ENCODE measurements at regions of chr2 and their contacts with region 1.

Region 1: DNA sequence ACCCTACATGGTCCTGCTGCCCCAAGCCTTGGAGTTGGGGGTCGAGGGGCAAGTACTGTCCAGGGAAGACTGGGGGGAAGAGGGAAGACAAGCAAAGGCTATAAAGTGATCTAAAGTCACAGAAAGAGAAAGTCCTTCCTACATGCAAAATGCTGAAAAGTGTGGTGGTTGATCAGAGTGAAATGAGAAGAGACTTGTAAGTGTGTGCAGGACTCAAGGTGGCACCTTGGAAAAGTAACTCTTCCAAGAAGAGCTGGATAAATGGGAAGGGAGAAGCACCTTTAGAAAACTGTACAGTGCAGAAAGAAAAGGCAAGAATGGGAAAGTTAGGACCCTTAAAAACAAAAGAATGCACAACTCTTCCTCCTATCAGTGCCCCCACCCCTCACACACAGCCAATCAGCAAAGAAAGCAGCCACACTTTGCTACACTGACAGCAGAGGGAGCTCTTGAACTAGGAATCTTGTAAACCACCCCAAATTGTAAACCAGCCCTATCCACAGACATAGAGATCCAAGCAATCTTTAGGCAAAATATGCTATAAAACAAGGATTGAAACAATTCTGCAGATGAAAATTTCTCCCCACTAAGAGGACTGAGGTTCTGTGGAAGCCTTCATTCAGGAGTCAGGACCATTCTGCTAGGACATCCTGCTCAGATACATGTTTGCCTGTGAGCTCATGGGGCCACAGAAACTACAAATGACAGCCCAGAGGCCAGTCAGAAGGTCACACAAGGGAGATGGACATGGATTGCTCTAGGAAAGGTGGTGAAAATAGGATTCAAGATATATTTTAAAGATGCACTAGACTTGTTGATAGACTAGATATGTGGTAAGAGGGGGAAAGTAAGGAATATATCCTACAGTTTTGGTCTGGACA is 146.4 kb downstream of the FTCDNL1 start:
- DNase-seq: peak; percentile 39
- ATAC-seq: peak; percentile 61
- H3K4me3 Mint-ChIP-seq: no peak overlapping the region
- H3K27ac Mint-ChIP-seq: no peak overlapping the region
- H3K4me1 Mint-ChIP-seq: no peaks in the 10 kb centered on the region
- H3K27me3 Mint-ChIP-seq: peaks cover 3% of the 10 kb centered on the region

Region 2: GRCh38 chr2:199424160-199424559 is 280.4 kb before region 1 on chr2:
- CTCF ChIA-PET with region 1: no interaction called
- POLR2A ChIA-PET with region 1: no interaction called
- intact Hi-C with region 1: no loop called
- DNase-seq: no peak
- ATAC-seq: no peak
- H3K4me3 Mint-ChIP-seq: no peak overlapping the region
- H3K27ac Mint-ChIP-seq: no peak overlapping the region
- H3K4me1 Mint-ChIP-seq: no peaks in the 10 kb centered on the region
- H3K27me3 Mint-ChIP-seq: peaks cover 7% of the 10 kb centered on the region

Region 3: GRCh38 chr2:199692489-199692888 is 12.1 kb before region 1 on chr2:
- CTCF ChIA-PET with region 1: no interaction called
- POLR2A ChIA-PET with region 1: no interaction called
- intact Hi-C with region 1: no loop called
- DNase-seq: no peak
- ATAC-seq: no peak
- H3K4me3 Mint-ChIP-seq: no peak overlapping the region
- H3K27ac Mint-ChIP-seq: no peak overlapping the region
- H3K4me1 Mint-ChIP-seq: no peaks in the 10 kb centered on the region
- H3K27me3 Mint-ChIP-seq: peaks cover 6% of the 10 kb centered on the region

Region 4: DNA sequence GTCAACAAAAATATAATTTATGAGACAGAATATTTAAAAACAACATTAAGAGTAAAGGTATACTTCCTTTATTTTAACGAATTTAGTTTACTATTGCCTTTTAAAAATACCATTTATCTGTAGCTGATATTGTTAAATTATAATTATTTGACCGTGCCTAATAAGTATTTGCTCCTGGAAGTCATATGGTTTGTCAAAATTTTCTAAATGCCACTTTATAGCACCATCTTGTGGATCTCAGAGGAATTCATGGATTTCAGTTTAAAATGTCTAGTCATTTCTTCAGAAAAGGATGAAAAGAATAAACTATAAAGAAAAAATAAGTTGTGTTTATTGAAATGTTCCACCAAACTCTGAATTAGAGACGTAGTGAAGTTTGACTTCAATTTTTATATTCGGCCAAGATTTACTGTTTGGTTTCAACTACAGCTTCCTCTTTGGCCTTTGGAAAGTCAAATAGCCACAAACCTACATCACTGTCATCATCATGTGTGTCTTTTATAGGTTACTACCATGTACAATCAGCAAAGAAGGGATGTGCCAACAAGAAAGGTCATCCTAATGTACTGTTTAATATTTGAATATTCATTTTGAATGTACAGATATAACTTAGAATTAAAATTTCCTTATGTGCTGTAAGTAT is 156.7 kb after region 1 on chr2:
- CTCF ChIA-PET with region 1: interaction called, 3 read pairs
- POLR2A ChIA-PET with region 1: no interaction called
- intact Hi-C with region 1: loop called (anchors 1 kb)
- DNase-seq: no peak
- ATAC-seq: no peak
- H3K4me3 Mint-ChIP-seq: no peak overlapping the region
- H3K27ac Mint-ChIP-seq: no peak overlapping the region
- H3K4me1 Mint-ChIP-seq: no peaks in the 10 kb centered on the region
- H3K27me3 Mint-ChIP-seq: peaks cover 21% of the 10 kb centered on the region

Region 5: DNA sequence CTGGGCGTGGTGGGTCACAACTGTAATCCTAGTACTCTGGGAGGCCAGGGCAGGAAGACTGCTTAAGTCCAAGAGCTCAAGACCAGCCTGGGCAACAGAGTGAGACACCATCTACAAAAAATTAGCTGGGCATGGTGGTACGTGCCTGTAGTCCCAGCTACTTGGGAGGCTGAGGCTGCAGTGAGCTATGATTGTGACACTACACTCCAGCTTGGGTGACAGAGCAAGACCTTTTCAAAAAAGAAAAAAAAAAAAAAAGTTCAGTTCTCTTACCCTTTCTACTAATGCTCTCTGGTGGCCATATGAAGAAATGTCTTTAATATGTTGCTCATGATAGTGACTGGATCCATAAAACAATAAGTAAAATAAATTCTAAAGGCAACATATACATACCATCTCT is 235.8 kb after region 1 on chr2:
- CTCF ChIA-PET with region 1: no interaction called
- POLR2A ChIA-PET with region 1: no interaction called
- intact Hi-C with region 1: loop called (anchors 2 kb)
- DNase-seq: no peak
- ATAC-seq: peak; percentile 87
- H3K4me3 Mint-ChIP-seq: no peak overlapping the region
- H3K27ac Mint-ChIP-seq: peak overlapping the region; percentile 37
- H3K4me1 Mint-ChIP-seq: peaks cover 8% of the 10 kb centered on the region
- H3K27me3 Mint-ChIP-seq: no peaks in the 10 kb centered on the region

Region 6: DNA sequence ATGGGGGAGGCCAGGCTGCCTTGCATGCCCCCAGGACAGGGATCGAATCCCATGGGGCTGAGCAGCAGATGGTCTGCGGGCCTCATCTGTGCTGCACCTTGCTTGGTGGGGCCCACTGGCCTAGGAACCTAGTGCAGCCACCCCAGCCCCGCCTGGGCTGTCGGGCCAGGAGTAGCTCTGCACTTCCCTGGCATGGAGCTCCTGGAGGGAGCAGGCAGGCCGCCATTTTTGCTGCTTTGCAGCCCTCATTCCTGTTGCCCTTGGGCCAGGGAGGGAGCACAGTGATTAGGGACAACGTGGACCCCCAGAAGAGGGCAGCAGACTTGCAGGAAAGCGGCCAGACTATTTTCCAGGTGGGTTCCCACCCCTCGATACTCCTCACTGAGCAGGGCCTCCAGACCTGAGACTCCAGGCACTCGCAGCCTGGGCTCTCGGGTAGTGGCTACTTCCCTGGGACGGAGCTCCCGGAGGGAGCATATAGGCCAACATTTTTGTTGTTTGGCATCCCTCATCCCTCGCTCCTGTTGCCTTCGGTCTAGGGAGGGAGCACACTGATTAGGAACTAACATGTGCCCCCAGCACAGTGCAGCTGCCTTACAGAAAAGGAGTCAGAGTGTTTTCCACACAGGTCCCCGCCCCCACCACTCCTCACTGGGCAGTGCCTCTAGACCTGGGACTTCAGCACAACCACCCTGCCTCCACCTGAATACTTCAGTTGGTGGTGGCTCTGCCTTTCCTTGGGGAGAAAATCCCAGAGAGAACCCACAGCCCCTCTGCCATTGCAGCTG is 350.3 kb after region 1 on chr2:
- CTCF ChIA-PET with region 1: no interaction called
- POLR2A ChIA-PET with region 1: no interaction called
- intact Hi-C with region 1: no loop called
- DNase-seq: no peak
- ATAC-seq: no peak
- H3K4me3 Mint-ChIP-seq: no peak overlapping the region
- H3K27ac Mint-ChIP-seq: no peak overlapping the region
- H3K4me1 Mint-ChIP-seq: no peaks in the 10 kb centered on the region
- H3K27me3 Mint-ChIP-seq: peaks cover 9% of the 10 kb centered on the region

Region 7: GRCh38 chr2:201176081-201176481 is 1471.5 kb after region 1 on chr2:
- CTCF ChIA-PET with region 1: no interaction called
- POLR2A ChIA-PET with region 1: no interaction called
- intact Hi-C with region 1: loop called in 1 of 2 experiments (anchors 5 kb)
- DNase-seq: no peak
- ATAC-seq: no peak
- H3K4me3 Mint-ChIP-seq: no peak overlapping the region
- H3K27ac Mint-ChIP-seq: no peak overlapping the region
- H3K4me1 Mint-ChIP-seq: peaks cover 10% of the 10 kb centered on the region
- H3K27me3 Mint-ChIP-seq: no peaks in the 10 kb centered on the region

Region 8: GRCh38 chr2:201432038-201432620 is 1727.5 kb after region 1 on chr2:
- CTCF ChIA-PET with region 1: no interaction called
- POLR2A ChIA-PET with region 1: no interaction called
- intact Hi-C with region 1: no loop called
- DNase-seq: no peak
- ATAC-seq: peak; percentile 99
- H3K4me3 Mint-ChIP-seq: peak overlapping the region; percentile 45
- H3K27ac Mint-ChIP-seq: peak overlapping the region; percentile 95
- H3K4me1 Mint-ChIP-seq: peaks cover 49% of the 10 kb centered on the region
- H3K27me3 Mint-ChIP-seq: no peaks in the 10 kb centered on the region